Head of caudate nucleus (tissue), 42 donors: ENCODE measurements at regions of chr15 and their contacts with region 1.

Region 1: GRCh38 chr15:61889706-61890105 is 170.5 kb downstream of the VPS13C start:
- DNase-seq: no peak

Region 2: DNA sequence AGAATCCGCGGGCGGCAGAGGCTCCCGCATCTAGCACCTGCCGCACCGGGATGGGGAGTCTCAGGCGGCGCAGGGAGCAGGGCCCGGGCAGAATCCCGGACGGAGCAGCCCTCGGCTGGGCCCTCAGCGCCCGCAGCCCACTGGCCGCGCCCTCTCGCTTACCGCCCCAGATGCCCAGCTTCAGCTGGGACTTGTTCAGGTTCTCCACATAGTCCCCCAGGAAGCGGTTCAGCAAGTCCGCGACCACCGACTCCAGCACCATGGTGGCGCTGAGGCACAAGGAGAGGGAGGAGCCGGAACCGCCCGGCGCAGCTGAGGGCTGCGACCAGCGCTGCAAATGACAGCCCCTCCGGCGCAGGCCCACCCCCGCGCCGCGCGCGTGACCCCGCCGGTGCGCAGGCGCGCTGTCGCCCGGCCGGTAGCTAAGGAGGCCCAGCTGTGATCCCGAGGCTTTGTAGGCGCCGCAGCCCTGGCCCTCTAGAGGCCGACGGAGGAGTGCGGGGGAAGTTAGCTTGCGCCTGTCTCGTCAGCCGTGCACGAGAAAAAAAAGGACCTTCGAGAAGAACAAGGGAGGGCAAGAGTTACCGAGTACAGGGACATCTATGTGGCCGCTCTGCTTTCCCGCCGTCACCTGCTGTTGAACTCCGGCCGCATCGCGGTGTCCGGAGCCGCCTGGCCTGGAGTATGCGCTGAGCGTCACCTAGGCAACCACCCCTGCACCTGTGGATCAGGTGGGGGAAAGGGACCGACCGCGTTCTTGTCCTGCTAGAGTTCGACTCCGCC is 170.6 kb after region 1 on chr15 and contains the start of gene VPS13C:
- intact Hi-C with region 1: loop called (anchors 10 kb)
- DNase-seq: peak; percentile 80 to 97 (median 92)